Heart left ventricle (tissue), 16 donors: ENCODE measurements at regions of chr11 and their contacts with region 1.

Region 1: DNA sequence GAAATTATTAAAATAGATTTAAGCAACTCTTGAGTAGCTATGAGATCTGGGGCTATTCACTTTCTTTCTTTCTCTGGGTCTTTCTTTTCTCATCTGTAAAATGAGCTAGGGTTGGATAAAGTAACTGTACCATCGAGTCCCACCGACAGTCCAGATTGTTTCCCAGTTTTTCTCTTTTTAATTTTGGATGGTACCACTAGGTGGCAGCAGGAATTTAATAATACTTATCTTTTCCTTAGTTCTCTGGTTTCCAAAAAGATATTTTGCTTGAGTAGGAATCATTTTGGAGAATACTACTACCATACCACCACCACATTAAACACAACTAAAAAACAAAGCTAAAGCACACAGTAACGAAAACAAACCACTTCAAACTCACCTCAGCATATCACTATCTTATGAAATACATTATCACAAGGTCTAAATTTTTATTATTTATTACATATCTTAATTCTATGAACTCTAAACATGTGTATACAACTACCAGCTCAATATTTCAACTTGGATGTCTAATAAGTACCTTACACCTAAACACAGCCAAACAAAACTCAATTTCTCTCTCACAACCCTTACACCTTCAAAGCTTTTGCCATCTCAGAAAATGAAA is 584.0 kb downstream of the KCNA4 start:
- DNase-seq: no peak
- ATAC-seq: no peak
- H3K4me3 ChIP-seq: no peak overlapping the region
- H3K27ac ChIP-seq: no peak overlapping the region
- H3K4me1 ChIP-seq: no peaks in the 10 kb centered on the region
- H3K27me3 ChIP-seq: no peaks in the 10 kb centered on the region
- CTCF ChIP-seq: peak; percentile 31 to 61 (median 45)
- POLR2A ChIP-seq: no peak

Region 2: DNA sequence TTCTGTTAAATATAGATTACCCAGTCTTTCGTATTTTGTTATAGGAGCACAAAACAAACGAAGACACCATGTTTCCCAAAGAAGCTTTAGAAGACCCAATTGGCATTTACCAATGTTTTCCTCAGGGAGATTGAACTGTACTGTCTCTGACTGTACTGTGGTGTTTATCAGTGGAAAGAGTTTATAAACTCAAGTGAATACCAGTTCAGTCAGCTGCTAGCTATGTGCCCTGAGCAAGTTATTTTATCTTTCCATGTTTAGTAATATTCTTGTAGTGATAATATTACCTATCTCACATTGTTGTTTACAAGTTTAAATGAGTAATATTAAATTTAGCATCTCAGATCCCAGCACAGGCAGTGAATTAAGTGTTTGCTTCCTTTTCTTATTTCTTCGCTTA is 189.2 kb before region 1 on chr11:
- intact Hi-C with region 1: no loop called
- DNase-seq: no peak
- ATAC-seq: no peak
- H3K4me3 ChIP-seq: no peak overlapping the region
- H3K27ac ChIP-seq: no peak overlapping the region
- H3K4me1 ChIP-seq: no peaks in the 10 kb centered on the region
- H3K27me3 ChIP-seq: no peaks in the 10 kb centered on the region
- CTCF ChIP-seq: no peak
- POLR2A ChIP-seq: no peak

Region 3: GRCh38 chr11:30143098-30143705 is 710.4 kb after region 1 on chr11:
- intact Hi-C with region 1: loop called in 2 of 10 experiments (anchors 5 to 10 kb)
- DNase-seq: no peak
- ATAC-seq: peak in 1 of 4 donors; percentile 15
- H3K4me3 ChIP-seq: no peak overlapping the region
- H3K27ac ChIP-seq: no peak overlapping the region
- H3K4me1 ChIP-seq: no peaks in the 10 kb centered on the region
- H3K27me3 ChIP-seq: no peaks in the 10 kb centered on the region
- CTCF ChIP-seq: peak; percentile 52 to 80 (median 70)
- POLR2A ChIP-seq: no peak

Region 4: GRCh38 chr11:30196400-30197206 is 763.8 kb after region 1 on chr11:
- intact Hi-C with region 1: loop called in 3 of 10 experiments (anchors 5 kb)
- DNase-seq: peak; percentile 39 to 72 (median 42)
- ATAC-seq: peak in 3 of 4 donors; percentile 64 to 92 (median 85)
- H3K4me3 ChIP-seq: no peak overlapping the region
- H3K27ac ChIP-seq: no peak overlapping the region
- H3K4me1 ChIP-seq: no peaks in the 10 kb centered on the region
- H3K27me3 ChIP-seq: no peaks in the 10 kb centered on the region
- CTCF ChIP-seq: peak; percentile 59 to 81 (median 74)
- POLR2A ChIP-seq: no peak

Region 5: DNA sequence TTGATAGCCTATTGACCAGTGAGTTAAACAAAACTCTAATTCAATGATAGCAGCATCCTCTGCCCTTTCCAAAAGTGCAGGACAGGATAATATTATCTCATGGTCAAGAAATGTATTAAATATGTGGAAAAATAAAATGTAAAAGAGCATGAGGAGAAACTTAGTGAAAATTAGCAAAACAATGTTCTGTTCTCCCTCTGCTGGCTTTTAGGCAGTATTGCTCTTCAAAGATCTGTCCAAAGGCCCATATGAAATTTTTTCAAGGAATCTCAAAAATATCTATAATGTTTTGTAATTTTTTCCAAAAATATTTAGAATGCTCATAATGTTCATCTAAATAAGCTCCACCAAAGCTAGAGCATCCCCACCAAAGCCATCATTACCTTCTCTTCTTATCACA is 881.8 kb after region 1 on chr11:
- intact Hi-C with region 1: loop called in 5 of 10 experiments (anchors 5 to 10 kb)
- DNase-seq: no peak
- ATAC-seq: no peak
- H3K4me3 ChIP-seq: no peak overlapping the region
- H3K27ac ChIP-seq: no peak overlapping the region
- H3K4me1 ChIP-seq: no peaks in the 10 kb centered on the region
- H3K27me3 ChIP-seq: peaks cover 0 to 7% (median 0%) of the 10 kb centered on the region in 9 donors
- CTCF ChIP-seq: peak; percentile 8 to 52 (median 33)
- POLR2A ChIP-seq: no peak

Region 6: GRCh38 chr11:30322826-30323710 is 890.2 kb after region 1 on chr11 and contains the start of gene ARL14EP:
- intact Hi-C with region 1: loop called in 7 of 10 experiments (anchors 5 to 10 kb)
- DNase-seq: peak; percentile 93 to 96 (median 94)
- ATAC-seq: peak; percentile 99 to 100 (median 100)
- H3K4me3 ChIP-seq: peak within 1 kb of the TSS; percentile 56 to 88 (median 80)
- H3K27ac ChIP-seq: peak within 1 kb of the TSS; percentile 73 to 94 (median 85)
- H3K4me1 ChIP-seq: peaks cover 0 to 46% (median 34%) of the 10 kb centered on the region in 12 donors
- H3K27me3 ChIP-seq: peaks cover 0 to 8% (median 0%) of the 10 kb centered on the region in 9 donors
- CTCF ChIP-seq: peak in 1 of 12 donors; percentile 21
- POLR2A ChIP-seq: peak in 1 of 2 donors; percentile 82
- total RNA-seq, gene ARL14EP: 23.1 to 43.8 (median 30.5) TPM